Heart left ventricle (tissue), 16 donors: ENCODE measurements at regions of chr11 and their contacts with region 1.

Region 1: DNA sequence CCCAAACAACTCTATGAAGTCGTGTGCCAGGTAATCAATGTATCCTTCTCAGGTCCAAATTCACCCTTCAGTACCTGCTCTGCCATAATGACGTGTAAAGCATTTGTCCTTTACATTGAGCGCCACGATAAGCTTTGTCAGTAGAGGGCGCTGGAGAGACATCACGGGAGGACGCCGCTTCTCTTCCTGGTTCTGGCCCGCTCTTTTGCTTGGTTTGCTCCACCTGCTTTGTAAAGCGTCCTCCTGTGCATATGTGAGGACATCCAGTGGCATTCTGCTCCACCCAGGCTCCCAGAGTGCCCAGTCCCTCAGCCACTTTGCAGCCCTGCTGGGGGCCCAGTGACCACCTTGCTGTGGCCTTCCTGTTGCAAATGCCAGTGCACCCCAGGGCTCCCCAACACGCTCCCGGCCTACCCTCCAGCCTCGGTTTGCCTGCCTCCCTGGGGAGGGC is 61.1 kb downstream of the WT1 start:
- DNase-seq: peak in 1 of 5 donors; percentile 13
- ATAC-seq: peak in 1 of 4 donors; percentile 34
- H3K4me3 ChIP-seq: no peak overlapping the region
- H3K27ac ChIP-seq: no peak overlapping the region
- H3K4me1 ChIP-seq: no peaks in the 10 kb centered on the region
- H3K27me3 ChIP-seq: peaks cover 0 to 6% (median 0%) of the 10 kb centered on the region in 9 donors
- CTCF ChIP-seq: peak; percentile 37 to 64 (median 50)
- POLR2A ChIP-seq: no peak

Region 2: DNA sequence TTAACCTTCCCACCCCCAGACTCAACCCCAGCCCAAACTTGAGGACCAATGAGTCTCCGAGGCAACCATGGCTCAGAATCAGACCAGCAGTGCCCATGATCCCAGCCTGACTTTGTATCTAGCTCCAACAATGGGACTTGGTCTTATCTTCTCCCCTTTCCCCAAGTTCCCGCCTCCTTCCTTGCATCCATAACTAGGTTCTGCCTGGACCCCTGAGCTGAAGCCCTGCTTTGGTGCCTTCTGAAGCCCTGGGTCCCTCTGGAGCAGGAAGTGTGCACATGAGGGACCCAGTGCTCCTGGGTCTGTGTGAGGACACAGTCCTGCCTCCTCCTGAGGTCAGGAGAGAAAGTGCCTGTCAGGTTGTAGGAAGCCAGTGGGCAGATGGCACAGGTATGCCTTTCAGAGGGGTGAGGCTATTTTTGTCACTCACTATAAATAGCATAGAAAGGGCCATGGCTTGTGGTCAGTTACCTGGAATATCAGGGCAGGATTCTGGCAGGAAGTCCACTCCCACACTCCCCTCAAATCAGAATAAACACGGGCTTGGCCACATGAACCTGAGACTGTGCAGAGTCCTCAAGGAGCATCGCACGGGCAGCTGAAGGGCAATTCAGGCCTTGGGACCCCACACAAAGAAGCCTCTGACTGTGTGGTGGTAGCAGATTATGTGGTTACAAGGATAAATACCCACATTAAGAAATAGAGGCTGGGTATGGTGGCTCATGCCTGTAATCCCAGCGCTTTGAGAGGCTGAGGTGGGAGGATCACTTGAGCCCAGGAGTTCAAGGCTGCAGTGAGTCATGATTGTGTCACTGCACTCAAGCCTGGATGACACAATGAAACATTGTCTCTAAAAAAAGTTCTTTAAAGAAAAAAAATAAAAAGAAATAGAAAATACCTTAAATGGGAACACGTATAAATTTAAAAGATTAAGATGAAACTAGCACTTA is 256.0 kb before region 1 on chr11:
- intact Hi-C with region 1: no loop called
- DNase-seq: no peak
- ATAC-seq: no peak
- H3K4me3 ChIP-seq: no peak overlapping the region
- H3K27ac ChIP-seq: no peak overlapping the region
- H3K4me1 ChIP-seq: no peaks in the 10 kb centered on the region
- H3K27me3 ChIP-seq: peaks cover 0 to 12% (median 0%) of the 10 kb centered on the region in 9 donors
- CTCF ChIP-seq: no peak
- POLR2A ChIP-seq: no peak

Region 3: DNA sequence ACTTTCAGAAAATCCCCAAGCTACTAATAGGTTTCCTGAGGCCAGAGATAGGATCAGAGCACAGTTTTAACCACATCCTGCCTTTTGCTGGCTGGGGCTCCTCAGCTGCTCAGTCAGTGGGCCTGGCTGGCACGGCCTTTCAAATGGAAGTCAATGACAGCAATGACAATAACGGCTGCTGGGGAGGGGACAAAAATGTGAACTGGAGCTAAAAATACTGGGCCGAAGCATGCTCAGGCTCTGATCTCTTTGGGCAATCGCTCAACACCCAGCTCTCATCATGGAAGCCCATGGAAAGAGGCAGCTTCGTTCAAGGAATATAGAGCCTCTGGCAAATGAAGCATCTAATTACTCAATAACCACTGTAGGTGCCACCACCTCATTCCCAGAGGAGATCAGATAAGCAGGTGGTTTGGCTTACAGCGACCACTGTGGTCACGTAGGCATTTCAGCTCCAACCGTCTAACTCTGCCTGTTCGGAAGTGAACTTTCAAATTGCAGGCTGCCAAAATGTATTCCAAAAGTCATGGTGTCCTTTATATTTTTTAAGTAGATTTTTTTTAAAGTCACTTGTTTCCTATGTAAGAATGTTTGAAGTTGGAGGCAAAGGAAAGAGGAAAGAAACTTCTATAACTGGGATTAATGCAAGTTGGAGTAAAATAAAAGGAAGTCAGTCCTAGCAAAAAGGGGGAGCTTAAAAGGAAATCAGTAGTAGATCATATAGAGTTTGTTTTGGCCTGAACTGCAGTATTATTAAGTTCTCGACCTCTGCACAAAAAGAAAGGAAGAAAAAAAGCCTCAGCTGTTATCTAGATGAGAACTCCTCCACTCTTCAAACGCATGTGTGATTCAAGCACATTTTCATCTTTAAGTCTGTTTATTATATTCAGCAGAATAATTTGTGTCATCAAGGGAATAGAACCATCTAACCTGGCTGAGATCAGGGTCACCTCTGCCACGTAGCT is 46.9 kb after region 1 on chr11:
- intact Hi-C with region 1: no loop called
- DNase-seq: peak; percentile 55 to 70 (median 64)
- ATAC-seq: peak; percentile 73 to 95 (median 80)
- H3K4me3 ChIP-seq: no peak overlapping the region
- H3K27ac ChIP-seq: peak overlapping the region in 10 of 12 donors; percentile 13 to 72 (median 54)
- H3K4me1 ChIP-seq: peaks cover 0 to 37% (median 12%) of the 10 kb centered on the region in 12 donors
- H3K27me3 ChIP-seq: peaks cover 0 to 33% (median 6%) of the 10 kb centered on the region in 9 donors
- CTCF ChIP-seq: no peak
- POLR2A ChIP-seq: no peak

Region 4: GRCh38 chr11:32562839-32563599 is 188.7 kb after region 1 on chr11:
- intact Hi-C with region 1: loop called in 1 of 10 experiments (anchors 10 kb)
- DNase-seq: no peak
- ATAC-seq: no peak
- H3K4me3 ChIP-seq: no peak overlapping the region
- H3K27ac ChIP-seq: no peak overlapping the region
- H3K4me1 ChIP-seq: no peaks in the 10 kb centered on the region
- H3K27me3 ChIP-seq: no peaks in the 10 kb centered on the region
- CTCF ChIP-seq: no peak
- POLR2A ChIP-seq: no peak